CD8-positive, alpha-beta T cell (primary cell): ENCODE measurements at regions of chr10 and their contacts with region 1.

Region 1: DNA sequence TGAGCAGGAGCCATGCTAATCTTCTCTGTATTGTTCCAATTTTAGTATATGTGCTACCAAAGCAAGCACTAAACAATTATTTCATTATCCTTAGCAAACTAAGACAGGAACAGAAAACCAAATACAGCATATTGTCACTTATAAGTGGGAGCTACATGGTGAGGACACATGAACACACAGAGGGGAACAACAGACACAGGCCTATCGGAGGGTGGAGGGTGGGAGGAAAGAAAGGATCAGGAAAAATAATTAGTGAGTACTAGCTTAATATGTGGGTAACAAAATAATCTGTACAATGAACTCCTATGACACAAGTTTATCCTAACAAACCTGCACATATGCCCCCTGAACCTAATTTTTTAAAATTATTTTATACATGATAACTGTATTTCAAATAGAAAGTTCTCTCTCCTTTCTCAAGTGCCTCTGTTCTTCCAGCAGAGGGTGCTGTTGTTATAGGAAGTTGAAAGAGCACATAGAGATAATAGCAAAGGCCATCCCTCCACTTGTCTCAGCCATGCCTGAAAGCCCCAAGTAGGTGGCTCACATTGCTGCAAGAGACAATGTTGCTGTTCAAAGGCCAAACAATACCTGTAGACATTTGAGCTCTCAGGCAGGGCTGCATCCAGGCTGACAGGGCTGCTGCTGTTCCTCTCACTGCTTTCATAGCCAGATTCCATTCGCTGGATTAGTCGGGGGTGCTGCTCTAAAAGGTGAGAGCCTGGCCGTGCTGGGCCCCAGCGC is 33.4 kb upstream of the PPP3CB start:
- DNase-seq: peak; percentile 4 to 82 (median 43)
- ATAC-seq: peak; percentile 94
- H3K4me3 ChIP-seq: no peak overlapping the region
- H3K4me3 Mint-ChIP-seq: no peak overlapping the region
- H3K27ac ChIP-seq: no peak overlapping the region
- H3K27ac Mint-ChIP-seq: no peak overlapping the region
- H3K4me1 ChIP-seq: no peaks in the 10 kb centered on the region
- H3K4me1 Mint-ChIP-seq: no peaks in the 10 kb centered on the region
- H3K27me3 ChIP-seq: no peaks in the 10 kb centered on the region
- H3K27me3 Mint-ChIP-seq: no peaks in the 10 kb centered on the region
- CTCF ChIP-seq: peak; percentile 93

Region 2: DNA sequence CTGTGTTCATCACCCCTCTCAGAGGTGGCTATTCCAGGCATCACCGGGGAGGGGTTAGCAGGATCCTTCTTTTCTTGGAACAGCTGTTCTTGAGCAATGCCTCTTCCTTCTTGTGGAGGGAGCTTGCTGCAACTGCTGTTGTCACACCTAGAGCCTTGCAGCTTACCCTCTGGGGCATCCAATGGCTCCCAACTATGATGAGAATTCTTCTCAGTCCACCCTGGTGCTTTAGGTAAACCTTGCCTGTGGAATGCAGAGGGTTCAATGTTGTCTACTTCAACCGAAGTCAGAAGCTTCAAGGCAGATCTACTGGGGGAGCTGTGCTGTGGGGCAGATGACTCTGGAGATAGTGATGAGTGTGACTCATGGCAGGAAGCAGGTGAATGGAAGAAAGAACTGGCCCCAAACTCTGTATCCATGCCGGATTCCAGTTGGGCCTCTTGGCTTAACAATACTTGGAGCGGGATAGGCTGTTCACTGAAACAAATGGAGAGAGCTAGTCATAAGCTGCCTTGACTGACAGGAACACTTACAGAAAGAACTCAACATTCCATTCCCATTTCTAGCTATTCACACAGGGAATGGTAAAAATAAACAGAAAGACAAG is 11.9 kb before region 1 on chr10:
- CTCF ChIA-PET with region 1: interaction called, 39 read pairs
- POLR2A ChIA-PET with region 1: no interaction called
- intact Hi-C with region 1: no loop called
- DNase-seq: no peak
- ATAC-seq: no peak
- H3K4me3 ChIP-seq: no peak overlapping the region
- H3K4me3 Mint-ChIP-seq: no peak overlapping the region
- H3K27ac ChIP-seq: no peak overlapping the region
- H3K27ac Mint-ChIP-seq: no peak overlapping the region
- H3K4me1 ChIP-seq: no peaks in the 10 kb centered on the region
- H3K4me1 Mint-ChIP-seq: no peaks in the 10 kb centered on the region
- H3K27me3 ChIP-seq: no peaks in the 10 kb centered on the region
- H3K27me3 Mint-ChIP-seq: no peaks in the 10 kb centered on the region
- CTCF ChIP-seq: no peak

Region 3: GRCh38 chr10:73552819-73553715 is 23.8 kb after region 1 on chr10:
- CTCF ChIA-PET with region 1: interaction called, 10 read pairs
- POLR2A ChIA-PET with region 1: no interaction called
- intact Hi-C with region 1: no loop called
- DNase-seq: no peak
- ATAC-seq: no peak
- H3K4me3 ChIP-seq: no peak overlapping the region
- H3K4me3 Mint-ChIP-seq: no peak overlapping the region
- H3K27ac ChIP-seq: no peak overlapping the region
- H3K27ac Mint-ChIP-seq: no peak overlapping the region
- H3K4me1 ChIP-seq: no peaks in the 10 kb centered on the region
- H3K4me1 Mint-ChIP-seq: no peaks in the 10 kb centered on the region
- H3K27me3 ChIP-seq: no peaks in the 10 kb centered on the region
- H3K27me3 Mint-ChIP-seq: no peaks in the 10 kb centered on the region
- CTCF ChIP-seq: no peak

Region 4: DNA sequence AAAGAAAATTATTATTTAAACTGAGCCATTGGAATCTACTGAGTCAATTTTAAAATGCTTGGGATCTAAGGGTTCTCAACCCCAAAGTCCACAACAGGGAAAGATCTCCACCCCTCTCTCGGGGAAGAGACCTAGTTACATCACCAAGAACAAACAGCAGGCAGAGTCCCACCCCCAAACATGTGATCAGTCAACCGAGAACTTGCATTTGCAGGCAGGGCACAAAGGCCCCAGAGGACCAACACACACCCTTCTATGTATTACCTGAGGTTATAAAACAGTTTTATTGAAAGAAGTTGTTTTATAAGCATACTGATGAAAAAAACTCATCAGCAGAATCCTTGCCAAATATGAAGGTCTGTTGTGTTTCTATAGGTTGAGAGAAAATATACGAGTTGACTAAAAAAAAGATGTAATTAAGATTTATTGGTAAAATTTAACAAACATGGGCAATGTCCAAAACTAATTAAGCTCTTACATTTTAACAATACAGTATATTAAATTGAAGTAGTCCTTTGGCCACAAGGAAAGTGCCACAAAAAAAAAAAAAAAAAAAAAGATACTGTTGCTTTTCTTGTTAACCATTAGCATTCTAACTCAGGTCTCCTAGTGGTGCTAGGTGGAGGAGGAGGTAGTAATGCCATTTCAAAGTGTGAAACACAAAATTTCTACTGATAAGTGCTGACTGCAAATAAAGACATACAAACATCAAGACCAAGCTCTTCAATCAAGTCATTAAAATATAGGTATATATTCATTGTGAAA is 62.9 kb after region 1 on chr10:
- CTCF ChIA-PET with region 1: interaction called, 6 read pairs
- POLR2A ChIA-PET with region 1: no interaction called
- intact Hi-C with region 1: loop called in 1 of 2 experiments (anchors 10 kb)
- DNase-seq: peak in 2 of 9 experiments; percentile 12 to 36
- ATAC-seq: no peak
- H3K4me3 ChIP-seq: no peak overlapping the region
- H3K4me3 Mint-ChIP-seq: peak overlapping the region; percentile 55
- H3K27ac ChIP-seq: no peak overlapping the region
- H3K27ac Mint-ChIP-seq: no peak overlapping the region
- H3K4me1 ChIP-seq: peaks cover 14% of the 10 kb centered on the region
- H3K4me1 Mint-ChIP-seq: peaks cover 15% of the 10 kb centered on the region
- H3K27me3 ChIP-seq: no peaks in the 10 kb centered on the region
- H3K27me3 Mint-ChIP-seq: no peaks in the 10 kb centered on the region
- CTCF ChIP-seq: no peak